Activated naive CD4-positive, alpha-beta T cell treated with anti-CD3 and anti-CD28 coated beads for 36 hours (primary cell): ENCODE measurements at regions of chr1 and their contacts with region 1.

Region 1: DNA sequence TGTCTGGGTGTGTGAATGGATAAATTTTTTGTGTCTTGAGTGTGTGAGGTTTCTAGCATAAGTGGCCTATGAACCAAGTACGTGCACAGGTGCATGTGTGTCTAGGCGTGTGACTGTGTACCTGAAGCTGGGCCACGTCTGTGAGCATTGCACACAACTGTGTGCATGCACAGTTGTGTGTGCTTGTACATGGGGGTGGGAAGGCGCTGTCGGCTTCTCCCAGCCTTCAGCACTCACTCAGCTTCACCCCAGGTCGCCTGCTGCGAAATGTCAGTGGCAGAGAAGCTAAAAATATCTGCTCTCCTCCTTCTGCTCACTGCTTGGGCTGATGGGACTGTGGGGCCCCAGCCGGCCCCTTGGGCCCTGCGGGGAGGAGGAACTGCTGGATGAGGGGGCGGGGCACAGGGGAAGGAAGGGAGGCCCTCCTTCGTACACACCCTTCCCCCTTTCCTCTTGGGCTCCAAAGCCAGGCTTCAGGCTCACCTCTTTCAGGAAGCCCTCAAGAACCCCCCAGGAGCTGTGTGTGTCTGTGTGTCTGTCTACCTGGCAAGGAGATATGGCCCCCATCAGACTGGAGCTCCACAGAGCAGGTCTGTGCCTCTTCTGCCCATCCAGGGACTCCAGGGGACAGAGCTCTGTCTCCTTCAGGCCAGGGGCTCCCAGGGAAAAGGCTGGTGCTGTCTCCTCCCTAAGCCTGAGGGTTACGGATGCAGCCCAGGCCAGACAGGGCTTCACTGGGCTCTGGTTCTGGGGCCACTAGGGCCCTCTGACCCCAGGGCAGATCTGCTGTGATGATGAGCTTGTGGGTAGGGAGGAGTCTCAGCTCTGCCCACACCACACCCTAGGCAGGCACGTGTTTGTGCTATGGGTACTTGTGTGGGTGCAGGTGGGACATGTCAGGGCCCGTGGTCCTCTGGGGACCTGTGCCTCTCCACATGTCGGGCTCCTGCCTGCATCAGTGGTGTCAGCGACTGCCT is 35.6 kb upstream of the WASF2 start:
- DNase-seq: peak; percentile 83
- H3K4me3 Mint-ChIP-seq: peak overlapping the region; percentile 69
- H3K27ac Mint-ChIP-seq: peak overlapping the region; percentile 72
- H3K4me1 Mint-ChIP-seq: peaks cover 56% of the 10 kb centered on the region
- H3K27me3 Mint-ChIP-seq: no peaks in the 10 kb centered on the region

Region 2: DNA sequence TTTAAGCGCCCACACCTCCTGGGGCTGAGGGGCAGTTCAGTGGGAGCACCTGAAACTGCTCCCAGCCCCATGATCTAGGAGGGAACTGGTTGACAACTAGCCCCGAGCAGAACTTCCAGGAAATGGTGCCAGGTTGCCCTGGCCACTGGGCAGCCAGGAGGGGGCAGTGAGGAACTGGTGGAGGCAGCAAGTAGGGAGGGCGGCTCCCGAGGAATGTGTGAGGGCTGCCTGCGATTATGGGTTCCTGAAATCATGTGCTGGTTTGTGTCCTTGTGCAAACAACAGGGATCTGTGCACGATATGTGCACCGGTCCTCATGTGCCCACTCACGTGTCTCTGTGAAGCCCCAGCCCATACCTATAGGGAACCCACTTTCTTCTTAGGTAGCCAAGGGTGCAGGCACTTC is 123.2 kb before region 1 on chr1:
- CTCF ChIA-PET with region 1: interaction called, 5 read pairs
- intact Hi-C with region 1: loop called (anchors 2 kb)
- DNase-seq: peak; percentile 53
- H3K4me3 Mint-ChIP-seq: no peak overlapping the region
- H3K27ac Mint-ChIP-seq: peak overlapping the region; percentile 74
- H3K4me1 Mint-ChIP-seq: peaks cover 19% of the 10 kb centered on the region
- H3K27me3 Mint-ChIP-seq: no peaks in the 10 kb centered on the region

Region 3: DNA sequence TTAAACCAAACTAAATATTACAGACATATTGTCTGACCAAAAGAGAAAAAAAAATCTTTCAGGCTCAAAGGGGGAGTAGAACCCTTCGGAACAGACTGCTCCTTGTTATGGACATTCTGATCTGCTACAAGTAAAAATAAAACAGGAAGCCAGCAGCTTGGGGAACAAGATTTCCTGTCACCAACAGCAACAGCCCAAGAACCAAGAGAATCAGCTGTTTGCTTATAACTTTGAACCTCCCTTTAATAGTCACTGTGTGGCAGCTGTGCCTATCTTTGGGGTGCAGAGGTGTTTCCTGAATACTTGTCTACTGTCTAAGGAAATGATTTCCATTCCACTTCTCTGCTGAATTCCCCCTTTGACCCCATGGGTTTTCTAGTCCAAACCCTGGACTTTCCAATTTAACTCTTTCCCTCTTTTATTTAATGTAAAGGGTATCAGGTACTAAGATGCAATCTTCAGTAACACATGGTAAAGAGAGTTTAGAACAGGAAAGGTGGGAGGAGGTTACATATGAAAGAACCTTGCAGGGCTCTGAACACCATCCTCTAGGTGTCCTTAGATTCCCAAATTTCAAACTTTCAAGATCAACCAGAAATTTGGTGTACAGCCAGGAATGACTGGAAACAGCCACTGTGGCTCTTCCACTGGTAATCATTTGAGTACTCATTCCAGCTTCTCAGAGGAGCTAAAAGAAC is 94.5 kb before region 1 on chr1:
- CTCF ChIA-PET with region 1: interaction called, 3 read pairs
- intact Hi-C with region 1: loop called (anchors 2 kb)
- DNase-seq: peak; percentile 41
- H3K4me3 Mint-ChIP-seq: peak overlapping the region; percentile 12
- H3K27ac Mint-ChIP-seq: peak overlapping the region; percentile 76
- H3K4me1 Mint-ChIP-seq: peaks cover 84% of the 10 kb centered on the region
- H3K27me3 Mint-ChIP-seq: no peaks in the 10 kb centered on the region

Region 4: DNA sequence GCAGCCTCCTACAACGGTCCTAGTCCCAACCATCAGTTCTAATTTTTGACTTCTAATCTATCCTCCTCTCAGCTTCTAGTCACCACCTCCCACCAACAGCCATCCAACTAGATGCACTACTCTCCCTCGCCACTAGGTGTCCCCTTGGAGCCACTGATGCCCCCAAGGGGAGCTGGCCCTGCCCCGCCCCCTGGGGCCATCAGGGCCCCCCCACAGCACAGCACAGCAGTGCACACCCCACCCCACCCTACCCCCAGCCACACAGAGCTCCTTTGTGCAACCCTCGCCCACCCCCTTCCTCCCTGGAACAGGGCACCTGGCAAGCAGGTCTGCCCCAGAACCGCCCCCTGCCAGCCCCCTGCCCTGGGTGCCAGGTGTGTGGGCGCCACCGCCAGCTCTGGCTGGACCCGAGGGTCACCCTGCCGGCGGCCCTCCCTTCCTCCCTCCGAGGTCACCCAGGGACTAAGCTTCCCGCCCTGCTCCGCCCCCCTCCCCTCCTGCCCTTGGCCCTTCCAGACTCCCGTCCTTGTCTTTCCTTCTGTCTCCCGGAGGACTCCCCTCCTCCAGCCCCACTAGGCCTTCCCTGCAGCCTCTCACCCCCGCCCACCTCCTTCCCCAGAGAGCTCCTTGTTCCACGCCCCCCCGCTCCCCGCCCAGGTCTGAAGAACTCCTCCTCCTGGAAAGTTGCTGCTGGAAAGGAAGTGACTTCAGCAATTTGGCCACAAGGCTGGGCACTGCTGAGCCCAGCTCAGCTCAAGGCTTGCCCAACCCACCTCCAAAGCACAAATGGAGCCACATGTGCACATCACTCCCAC is 31.4 kb after region 1 on chr1:
- CTCF ChIA-PET with region 1: interaction called, 31 read pairs
- intact Hi-C with region 1: no loop called
- DNase-seq: peak; percentile 86
- H3K4me3 Mint-ChIP-seq: no peak overlapping the region
- H3K27ac Mint-ChIP-seq: peak overlapping the region; percentile 6
- H3K4me1 Mint-ChIP-seq: peaks cover 21% of the 10 kb centered on the region
- H3K27me3 Mint-ChIP-seq: no peaks in the 10 kb centered on the region